Activated CD4-positive, alpha-beta T cell treated with anti-CD3 and anti-CD28 coated beads, Interleukin-2, amount 10 ng/mL, durations not matched to agents 24 days and 14 days (primary cell): ENCODE measurements at regions of chr15 and their contacts with region 1.

Region 1: DNA sequence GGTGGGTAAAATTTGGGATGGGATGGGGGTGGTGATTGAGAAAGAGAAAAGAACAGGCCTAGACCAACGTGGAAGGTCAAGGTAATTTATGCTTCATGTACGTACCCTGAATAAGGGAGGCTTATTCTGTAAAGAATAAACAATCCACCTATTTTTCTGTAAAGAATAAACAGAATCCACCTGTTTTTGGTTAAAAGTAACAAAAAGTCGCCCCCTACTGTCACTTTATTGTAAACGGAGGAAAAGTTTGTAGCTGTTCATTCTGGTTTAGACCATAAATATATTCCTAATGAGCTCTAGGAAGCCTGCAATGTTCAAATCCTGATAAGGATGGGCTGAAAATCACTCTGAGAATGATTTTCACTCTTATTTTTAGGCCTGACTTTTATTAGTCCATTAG is 23.5 kb upstream of the SQOR start:
- DNase-seq: peak; percentile 66
- H3K4me3 Mint-ChIP-seq: no peak overlapping the region
- H3K27ac Mint-ChIP-seq: peak overlapping the region; percentile 15
- H3K4me1 Mint-ChIP-seq: peaks cover 10% of the 10 kb centered on the region
- H3K27me3 Mint-ChIP-seq: no peaks in the 10 kb centered on the region

Region 2: DNA sequence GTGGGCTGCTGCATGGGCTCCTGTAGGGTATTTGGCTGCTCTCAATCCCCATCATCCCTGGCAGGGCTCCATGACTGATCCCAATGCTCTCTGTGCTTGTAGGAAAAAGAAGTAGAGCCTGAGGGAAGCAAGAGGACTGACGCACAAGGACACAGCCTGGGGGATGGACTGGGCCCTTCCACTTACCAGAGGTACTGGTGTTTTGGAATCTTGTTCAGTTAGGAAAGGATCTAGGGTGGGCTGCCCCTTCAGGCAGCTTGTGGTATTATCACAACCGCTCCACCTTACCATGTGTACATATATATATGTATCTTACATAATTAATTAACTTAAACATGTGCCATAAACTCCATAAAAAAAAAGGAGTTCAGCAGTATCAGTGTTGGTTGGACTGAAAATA is 358.0 kb before region 1 on chr15:
- intact Hi-C with region 1: no loop called
- DNase-seq: no peak
- H3K4me3 Mint-ChIP-seq: no peak overlapping the region
- H3K27ac Mint-ChIP-seq: no peak overlapping the region
- H3K4me1 Mint-ChIP-seq: no peaks in the 10 kb centered on the region
- H3K27me3 Mint-ChIP-seq: no peaks in the 10 kb centered on the region

Region 3: GRCh38 chr15:45429974-45430792 is 181.1 kb before region 1 on chr15:
- intact Hi-C with region 1: loop called (anchors 2 kb)
- DNase-seq: peak; percentile 97
- H3K4me3 Mint-ChIP-seq: peak overlapping the region; percentile 70
- H3K27ac Mint-ChIP-seq: no peak overlapping the region
- H3K4me1 Mint-ChIP-seq: peaks cover 2% of the 10 kb centered on the region
- H3K27me3 Mint-ChIP-seq: peaks cover 23% of the 10 kb centered on the region